Activated T-helper 2 cell treated with anti-CD3 and anti-CD28 coated beads, Interferon-gamma antibody, Interleukin-2, Interleukin-4, amounts not matched to agents 10 μg/mL and 5 μg/mL and 100 μg/mL, durations not matched to agents 14 hours and 24 hours and 36 hours (primary cell): ENCODE measurements at regions of chr6 and their contacts with region 1.

Region 1: DNA sequence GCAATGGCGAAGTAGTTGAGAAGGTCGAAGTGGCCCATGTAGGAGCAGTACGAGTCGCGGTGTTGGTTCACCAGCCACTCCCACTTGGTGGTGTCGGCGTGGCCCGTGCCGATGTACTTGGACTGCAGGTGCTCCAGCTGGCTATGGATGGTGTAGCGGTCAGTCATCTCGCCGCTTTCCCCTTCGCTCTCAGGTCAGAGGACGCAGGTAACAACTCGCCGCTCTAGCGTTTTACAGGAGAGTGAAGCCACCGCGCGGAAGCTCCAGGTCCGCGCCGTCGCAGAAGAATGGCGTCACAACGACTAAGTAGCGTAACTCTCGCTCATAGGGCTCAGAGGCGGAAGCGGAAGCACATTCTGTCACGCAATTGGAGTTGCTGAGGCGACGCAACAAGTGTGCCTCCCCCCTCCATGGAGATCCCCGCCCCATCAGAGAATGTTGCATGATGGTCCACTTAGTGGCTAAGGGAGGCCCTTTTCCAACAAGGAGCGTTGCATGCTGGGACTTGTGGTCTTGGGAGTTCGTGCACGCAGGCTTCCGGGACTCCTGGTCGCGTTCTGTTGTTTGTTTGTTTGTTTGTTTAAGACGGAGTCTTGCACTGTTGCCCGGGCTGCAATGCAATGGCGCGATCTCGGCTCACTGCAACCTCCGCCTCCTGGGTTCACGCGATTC is at the start of gene SF3B5:
- DNase-seq: peak; percentile 97
- H3K4me3 Mint-ChIP-seq: peak within 1 kb of the TSS; percentile 93
- H3K27ac Mint-ChIP-seq: peak within 1 kb of the TSS; percentile 92
- H3K4me1 Mint-ChIP-seq: peaks cover 21% of the 10 kb centered on the region
- H3K27me3 Mint-ChIP-seq: no peaks in the 10 kb centered on the region
- total RNA-seq, gene SF3B5: 207 and 208 TPM in 2 replicates

Region 2: GRCh38 chr6:143806282-143807102 is 289.0 kb before region 1 on chr6:
- intact Hi-C with region 1: loop called (anchors 1 kb)
- DNase-seq: peak; percentile 19
- H3K4me3 Mint-ChIP-seq: no peak overlapping the region
- H3K27ac Mint-ChIP-seq: peak overlapping the region; percentile 84
- H3K4me1 Mint-ChIP-seq: peaks cover 46% of the 10 kb centered on the region
- H3K27me3 Mint-ChIP-seq: no peaks in the 10 kb centered on the region

Region 3: GRCh38 chr6:144055121-144055931 is 40.1 kb before region 1 on chr6:
- intact Hi-C with region 1: loop called (anchors 1 kb)
- DNase-seq: peak; percentile 36
- H3K4me3 Mint-ChIP-seq: peak overlapping the region; percentile 75
- H3K27ac Mint-ChIP-seq: peak overlapping the region; percentile 94
- H3K4me1 Mint-ChIP-seq: peaks cover 40% of the 10 kb centered on the region
- H3K27me3 Mint-ChIP-seq: no peaks in the 10 kb centered on the region

Region 4: GRCh38 chr6:144149891-144150709 is 54.6 kb after region 1 on chr6 and contains the start of gene STX11:
- intact Hi-C with region 1: loop called (anchors 1 kb)
- DNase-seq: peak; percentile 79
- H3K4me3 Mint-ChIP-seq: peak within 1 kb of the TSS; percentile 84
- H3K27ac Mint-ChIP-seq: peak within 1 kb of the TSS; percentile 94
- H3K4me1 Mint-ChIP-seq: peaks cover 49% of the 10 kb centered on the region
- H3K27me3 Mint-ChIP-seq: no peaks in the 10 kb centered on the region
- total RNA-seq, gene STX11: 19.2 and 19.7 TPM in 2 replicates

Region 5: GRCh38 chr6:144343701-144344428 is 248.4 kb after region 1 on chr6:
- intact Hi-C with region 1: loop called (anchors 5 kb)
- DNase-seq: peak; percentile 44
- H3K4me3 Mint-ChIP-seq: peak overlapping the region; percentile 93
- H3K27ac Mint-ChIP-seq: peak overlapping the region; percentile 99
- H3K4me1 Mint-ChIP-seq: peaks cover 67% of the 10 kb centered on the region
- H3K27me3 Mint-ChIP-seq: no peaks in the 10 kb centered on the region